Sigmoid colon (tissue), 7 donors: ENCODE measurements at regions of chr1 and their contacts with region 1.

Region 1: DNA sequence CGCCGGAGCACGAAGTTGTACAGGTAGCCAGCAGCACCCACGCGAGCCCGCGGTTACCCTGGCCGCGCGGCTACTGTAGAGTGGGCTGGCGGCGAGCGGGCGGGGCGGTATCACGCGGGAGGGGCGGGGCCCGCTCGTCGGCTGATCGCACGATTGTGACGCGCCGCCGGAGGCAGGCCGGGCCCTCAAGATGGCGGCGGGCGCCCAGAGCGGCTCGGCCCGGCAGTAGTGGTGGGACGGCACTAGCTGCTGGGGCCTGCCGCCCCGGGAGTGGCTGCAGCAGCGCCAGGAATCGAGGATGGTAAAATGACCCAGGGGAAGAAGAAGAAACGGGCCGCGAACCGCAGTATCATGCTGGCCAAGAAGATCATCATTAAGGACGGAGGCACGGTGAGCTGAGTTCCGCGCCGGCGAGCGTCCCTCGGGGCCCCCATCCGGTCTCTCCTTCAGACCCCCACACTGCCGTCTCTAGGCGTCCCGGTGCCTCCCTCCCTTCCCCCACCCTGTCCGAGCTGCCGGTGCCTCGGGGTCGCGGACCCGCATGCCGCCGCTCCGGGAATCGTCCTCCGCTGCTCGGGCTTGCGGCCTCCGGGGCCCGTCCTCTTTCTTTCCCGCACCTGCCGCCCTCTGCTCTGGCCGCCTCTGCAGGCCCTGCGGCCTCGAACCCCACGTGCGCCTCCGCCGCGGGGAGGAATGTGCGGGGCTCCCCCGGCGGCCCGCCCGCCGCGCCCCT is 68.3 kb downstream of the SLC35A3 start:
- DNase-seq: peak; percentile 94
- H3K4me3 ChIP-seq: peak overlapping the region; percentile 76 to 91 (median 82)
- H3K27ac ChIP-seq: peak overlapping the region; percentile 96 to 99 (median 98)
- H3K4me1 ChIP-seq: peaks cover 0 to 44% (median 43%) of the 10 kb centered on the region in 4 donors
- H3K27me3 ChIP-seq: no peaks in the 10 kb centered on the region
- CTCF ChIP-seq: no peak
- EP300 ChIP-seq: peak in 1 of 4 donors; percentile 4
- POLR2A ChIP-seq: peak; percentile 87 to 90

Region 2: DNA sequence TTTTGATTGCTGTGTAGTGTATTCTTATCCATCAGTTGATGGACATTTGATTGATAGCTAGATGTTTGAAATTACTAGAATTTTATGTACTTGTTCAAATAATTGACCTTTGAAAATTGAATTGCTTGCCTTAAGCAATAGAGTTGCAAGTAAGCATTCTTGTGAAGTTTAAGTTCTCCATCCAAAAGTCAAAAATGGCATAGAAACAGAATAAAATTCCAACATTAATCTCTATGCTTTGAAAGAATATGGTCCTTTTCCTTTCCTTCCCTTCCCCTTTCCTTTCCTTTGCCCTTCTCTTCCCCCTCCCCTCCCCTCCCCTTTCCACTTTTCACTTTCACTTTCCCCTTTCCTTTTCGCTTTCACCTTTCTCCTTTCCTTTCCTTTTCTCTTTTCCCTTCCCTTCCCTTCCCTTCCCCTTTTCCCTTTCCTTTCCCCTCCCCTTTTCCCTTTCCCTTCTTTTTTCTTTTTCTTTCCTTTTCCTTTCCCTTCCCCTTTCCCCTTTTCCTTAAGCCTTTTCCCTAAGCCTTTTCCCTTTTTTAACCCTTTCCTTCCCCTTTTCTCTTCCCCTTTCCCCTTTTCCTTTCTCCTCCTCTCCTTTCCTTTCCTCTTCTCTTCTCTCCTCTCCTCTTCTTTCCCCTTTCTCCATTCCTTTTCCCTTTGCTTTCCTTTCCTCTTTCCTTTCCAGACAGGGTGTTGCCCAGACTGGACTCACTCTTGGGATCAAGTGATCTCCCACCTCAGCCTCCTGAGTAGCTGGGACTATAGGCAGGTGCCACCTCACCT is 27.3 kb after region 1 on chr1:
- intact Hi-C with region 1: no loop called
- DNase-seq: no peak
- H3K4me3 ChIP-seq: no peak overlapping the region
- H3K27ac ChIP-seq: no peak overlapping the region
- H3K4me1 ChIP-seq: no peaks in the 10 kb centered on the region
- H3K27me3 ChIP-seq: no peaks in the 10 kb centered on the region
- CTCF ChIP-seq: no peak
- EP300 ChIP-seq: no peak
- POLR2A ChIP-seq: no peak

Region 3: GRCh38 chr1:100206301-100206700 is 168.2 kb after region 1 on chr1:
- intact Hi-C with region 1: loop called (anchors 5 kb)
- DNase-seq: no peak
- H3K4me3 ChIP-seq: no peak overlapping the region
- H3K27ac ChIP-seq: no peak overlapping the region
- H3K4me1 ChIP-seq: peaks cover 0 to 22% (median 8%) of the 10 kb centered on the region in 4 donors
- H3K27me3 ChIP-seq: no peaks in the 10 kb centered on the region
- CTCF ChIP-seq: no peak
- EP300 ChIP-seq: no peak
- POLR2A ChIP-seq: no peak

Region 4: GRCh38 chr1:100895540-100896483 is 857.7 kb after region 1 on chr1 and contains the start of gene SLC30A7:
- intact Hi-C with region 1: loop called (anchors 5 kb)
- DNase-seq: peak; percentile 96
- H3K4me3 ChIP-seq: peak within 1 kb of the TSS; percentile 60 to 85 (median 72)
- H3K27ac ChIP-seq: peak within 1 kb of the TSS; percentile 89 to 97 (median 93)
- H3K4me1 ChIP-seq: peaks cover 0 to 31% (median 18%) of the 10 kb centered on the region in 4 donors
- H3K27me3 ChIP-seq: no peaks in the 10 kb centered on the region
- CTCF ChIP-seq: no peak
- EP300 ChIP-seq: no peak
- POLR2A ChIP-seq: peak; percentile 38 to 63
- total RNA-seq, gene SLC30A7: 10.9 to 16.7 (median 14.1) TPM